ENCODE measurements at regions of chr9 and their contacts with region 1.

Region 1: DNA sequence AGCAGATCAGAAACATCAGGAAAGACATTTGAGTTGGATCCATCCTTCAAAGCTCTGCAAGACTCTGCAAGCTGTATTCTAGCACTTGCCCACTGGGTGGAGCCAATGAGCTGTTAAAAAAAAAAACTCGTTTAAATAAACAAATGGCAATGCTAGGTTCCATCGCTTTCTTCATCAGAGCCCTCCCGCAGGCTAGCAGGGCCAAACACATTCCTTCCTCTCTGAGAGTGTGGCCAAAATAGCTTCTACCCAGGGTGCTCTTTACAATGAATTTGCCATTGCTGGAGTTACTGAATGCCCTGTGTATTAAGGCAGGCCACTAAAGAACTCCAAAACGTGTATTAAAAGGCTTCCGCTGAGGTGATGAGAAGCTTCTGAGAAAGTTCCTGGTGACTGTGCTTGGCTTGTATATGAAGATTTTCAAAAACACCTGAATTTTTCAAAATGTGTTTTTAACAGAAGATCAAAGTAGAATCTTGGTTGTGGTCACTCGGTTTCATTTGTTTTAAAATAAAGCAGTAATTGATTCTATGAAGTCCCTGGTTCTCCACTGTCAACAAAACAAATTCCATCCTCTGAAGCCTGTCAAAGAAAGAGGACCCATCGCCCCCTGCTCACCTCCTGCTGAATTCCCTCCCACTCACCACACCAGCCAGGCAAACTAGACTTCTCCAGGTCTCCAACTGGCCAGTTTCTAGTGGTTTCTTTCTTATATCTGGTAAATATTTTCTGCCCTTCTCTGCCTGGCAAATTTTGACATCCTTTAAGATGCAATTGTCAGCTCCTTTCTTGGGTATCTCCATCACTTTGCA is 36.5 kb upstream of the EQTN start:
- DNase-seq: peak; percentile 78
- CTCF ChIP-seq: peak; percentile 82

Region 2: DNA sequence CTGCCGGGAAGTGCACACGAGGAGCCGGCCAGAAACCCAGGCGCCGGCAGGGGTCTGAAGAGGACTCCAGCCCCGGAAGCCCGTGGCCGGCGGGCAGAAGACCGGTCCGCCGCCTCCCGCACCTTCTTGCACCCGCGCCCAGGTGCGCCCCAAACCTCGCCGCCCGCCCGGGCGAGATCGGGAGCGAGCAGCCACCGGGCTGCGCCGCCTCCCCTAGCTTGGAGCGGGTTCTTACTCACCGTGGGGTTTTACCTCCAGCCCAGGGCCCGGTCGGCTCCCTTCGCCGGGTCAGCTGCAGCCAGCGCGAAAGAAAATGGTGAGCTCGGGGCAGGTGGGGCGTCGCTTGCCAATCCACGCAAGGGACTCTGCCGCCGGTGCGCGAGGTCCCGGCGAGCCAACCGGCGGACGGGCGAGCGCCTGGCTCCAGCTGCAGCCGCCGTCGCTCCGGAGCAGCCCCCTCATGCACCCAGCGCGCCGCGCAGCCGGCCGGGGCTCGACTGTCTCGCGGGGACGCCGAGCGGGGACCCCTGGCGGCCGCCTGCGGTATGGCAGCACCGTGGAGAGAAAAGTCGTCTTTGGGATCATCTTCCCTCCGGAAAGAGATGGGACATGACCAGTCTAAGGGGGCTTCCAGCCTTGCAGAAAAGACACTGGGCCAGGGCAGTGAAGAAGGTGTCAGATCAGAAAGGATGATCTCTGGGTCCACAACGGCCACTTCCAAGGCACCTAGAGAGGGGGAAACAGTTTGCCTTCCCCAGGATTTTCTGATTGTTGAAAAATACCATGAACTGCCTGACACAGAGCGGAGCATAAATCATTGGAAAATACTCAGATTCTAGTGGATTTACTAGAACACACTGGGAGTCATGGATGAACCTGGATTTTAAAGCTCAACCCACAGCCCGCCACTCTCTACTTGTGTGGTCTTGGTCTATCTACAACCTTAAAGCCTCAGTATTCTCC is 196.2 kb after region 1 on chr9 and contains the start of gene MOB3B:
- in situ Hi-C with region 1: loop called (anchors 5 kb)
- DNase-seq: peak; percentile 80
- CTCF ChIP-seq: peak; percentile 91

Measured in GM13977 (cell line).